Psoas muscle (tissue), 8 donors: ENCODE measurements at regions of chr2 and their contacts with region 1.

Region 1: DNA sequence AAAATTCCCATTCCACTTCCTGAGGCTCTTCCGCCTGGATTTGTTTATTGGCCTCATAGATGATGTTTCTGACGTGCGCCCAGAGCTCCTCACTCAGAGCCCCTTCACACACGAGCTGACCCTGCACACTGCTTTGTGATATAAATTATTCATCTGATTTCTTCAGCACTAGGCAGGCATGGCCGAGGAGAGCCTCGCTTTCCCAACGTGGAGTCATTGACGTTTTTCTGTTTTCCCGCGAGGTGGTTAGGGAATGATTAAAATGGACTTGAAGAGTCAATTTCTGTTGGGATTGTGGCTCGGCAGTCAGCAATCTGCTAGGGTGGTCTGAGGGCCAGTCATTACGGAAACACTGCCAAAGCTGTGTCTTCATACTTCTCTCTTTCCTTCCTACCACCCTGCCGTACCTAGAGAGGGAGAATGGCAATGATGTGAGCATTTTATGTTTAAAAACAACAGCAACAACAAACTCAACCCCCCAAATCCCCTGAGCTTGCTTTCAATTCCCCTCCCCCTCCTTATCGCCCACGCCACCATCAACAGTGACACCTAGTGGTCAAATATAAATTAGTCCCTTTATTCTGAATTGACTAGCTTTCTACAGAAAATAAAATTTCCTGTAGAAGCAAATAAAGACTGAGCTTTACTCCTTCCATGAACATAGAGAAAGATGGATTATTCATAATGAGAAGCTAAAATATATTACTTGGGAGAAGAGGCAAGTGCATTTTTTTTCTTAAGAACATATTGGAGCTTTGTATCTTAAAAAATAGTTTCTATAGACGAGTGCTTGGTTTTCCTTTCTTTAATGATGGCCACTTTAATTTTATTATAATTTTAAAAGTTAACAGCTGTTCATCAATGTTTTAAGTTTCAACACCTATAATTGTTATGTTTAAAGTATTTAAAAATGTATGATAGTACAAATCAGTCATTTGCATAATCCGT is 285.1 kb downstream of the MTX2 start:
- DNase-seq: no peak
- ATAC-seq: peak; percentile 61 to 91 (median 84)
- H3K4me3 ChIP-seq: peak overlapping the region; percentile 74
- H3K27ac ChIP-seq: peak overlapping the region; percentile 57
- H3K4me1 ChIP-seq: peaks cover 12% of the 10 kb centered on the region
- H3K27me3 ChIP-seq: no peaks in the 10 kb centered on the region
- CTCF ChIP-seq: peak; percentile 82

Region 2: DNA sequence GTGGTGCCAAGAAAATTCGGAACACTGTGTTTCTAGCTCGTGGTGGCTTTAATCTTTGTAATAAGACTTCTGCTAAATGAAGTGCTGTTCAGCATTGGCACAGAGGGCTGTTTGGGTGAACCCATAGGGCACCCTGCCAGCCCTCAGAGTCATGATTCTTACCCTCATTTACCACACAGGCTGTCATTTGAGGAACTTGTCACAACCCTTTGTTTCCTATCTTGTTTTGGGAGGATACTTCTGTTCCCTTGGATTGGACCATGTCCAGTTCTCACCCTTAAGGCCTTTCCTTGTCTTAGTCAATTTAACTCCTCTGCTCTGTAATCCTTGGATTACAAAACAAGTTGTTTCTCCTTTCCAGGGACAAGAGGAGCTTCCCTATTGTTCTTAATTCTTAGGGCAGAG is 59.4 kb before region 1 on chr2:
- intact Hi-C with region 1: no loop called
- DNase-seq: peak; percentile 63 to 79
- ATAC-seq: peak in 1 of 4 donors; percentile 4
- H3K4me3 ChIP-seq: no peak overlapping the region
- H3K27ac ChIP-seq: no peak overlapping the region
- H3K4me1 ChIP-seq: peaks cover 15% of the 10 kb centered on the region
- H3K27me3 ChIP-seq: peaks cover 0 to 4% (median 0%) of the 10 kb centered on the region in 3 donors
- CTCF ChIP-seq: no peak

Region 3: DNA sequence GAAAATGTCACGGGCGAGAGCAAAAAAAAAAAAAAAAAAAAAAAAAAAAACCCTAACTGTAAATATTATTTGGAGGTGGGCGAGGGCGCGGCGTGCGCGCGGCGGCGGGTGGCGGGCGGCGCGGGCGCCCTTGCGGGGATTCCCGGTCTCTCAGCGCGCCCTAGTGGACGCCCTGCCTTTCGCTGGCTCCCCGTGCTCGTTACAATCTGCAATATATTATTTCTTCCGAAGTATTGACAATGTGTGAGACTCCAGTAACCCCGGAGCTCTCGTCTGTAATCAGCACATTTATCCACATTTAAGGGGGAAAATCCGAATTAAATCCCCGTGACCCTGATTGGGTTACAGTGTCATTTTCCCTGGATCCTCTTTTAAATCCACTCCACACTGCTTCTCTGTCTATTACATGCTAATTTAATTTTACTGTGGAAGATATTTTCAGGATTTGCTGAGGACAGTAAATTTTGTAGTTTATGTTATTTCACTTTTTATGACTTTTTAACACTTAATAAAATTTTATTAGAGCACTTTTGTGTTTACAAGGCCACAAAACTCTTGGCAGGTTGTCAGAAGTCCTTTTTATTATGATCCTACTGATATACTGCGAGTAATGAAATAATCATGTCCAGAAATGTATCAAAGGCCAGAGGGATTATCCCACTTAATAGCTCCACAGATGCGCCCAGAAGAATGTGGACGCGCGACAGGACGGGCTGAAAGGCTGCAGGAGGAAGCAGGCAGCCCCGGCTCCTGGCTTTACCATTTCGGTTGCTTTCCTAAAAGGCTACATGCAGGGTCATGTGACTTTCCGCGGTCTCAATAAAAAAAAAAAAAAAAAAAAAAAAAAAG is 84.0 kb after region 1 on chr2:
- intact Hi-C with region 1: loop called in 1 of 2 experiments (anchors 5 kb)
- DNase-seq: peak; percentile 77 to 83
- ATAC-seq: peak; percentile 89 to 98 (median 92)
- H3K4me3 ChIP-seq: peak overlapping the region; percentile 87
- H3K27ac ChIP-seq: peak overlapping the region; percentile 39
- H3K4me1 ChIP-seq: no peaks in the 10 kb centered on the region
- H3K27me3 ChIP-seq: peaks cover 0 to 16% (median 0%) of the 10 kb centered on the region in 3 donors
- CTCF ChIP-seq: peak; percentile 88

Region 4: GRCh38 chr2:176789751-176790150 is 235.4 kb after region 1 on chr2:
- intact Hi-C with region 1: no loop called
- DNase-seq: no peak
- ATAC-seq: no peak
- H3K4me3 ChIP-seq: no peak overlapping the region
- H3K27ac ChIP-seq: no peak overlapping the region
- H3K4me1 ChIP-seq: peaks cover 17% of the 10 kb centered on the region
- H3K27me3 ChIP-seq: peaks cover 0 to 2% (median 0%) of the 10 kb centered on the region in 3 donors
- CTCF ChIP-seq: no peak